GM23248 (cell line): ENCODE measurements at regions of chrX and their contacts with region 1.

Region 1: DNA sequence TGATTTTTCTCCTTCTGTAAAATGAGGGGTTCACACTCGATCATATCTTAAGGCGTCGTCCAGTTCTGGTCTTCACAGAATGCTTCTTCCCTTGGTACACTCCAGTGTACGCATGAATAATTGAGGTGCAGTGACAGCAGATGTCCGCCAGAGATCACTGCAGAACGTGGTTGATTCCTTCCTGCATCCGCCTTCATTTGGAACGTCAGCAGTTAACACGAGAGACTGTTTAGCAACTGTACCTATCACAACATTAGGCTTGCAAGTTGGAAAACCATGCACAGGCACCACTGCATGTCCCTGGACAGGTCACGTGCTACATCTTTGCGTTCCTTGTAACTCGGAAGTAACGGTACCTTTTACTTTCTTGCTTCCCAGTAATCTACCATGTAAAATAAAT is 66.0 kb upstream of the GEMIN8 start:
- DNase-seq: peak; percentile 71
- H3K4me3 ChIP-seq: peak overlapping the region; percentile 56
- H3K27ac ChIP-seq: no peak overlapping the region
- H3K4me1 ChIP-seq: no peaks in the 10 kb centered on the region
- H3K27me3 ChIP-seq: no peaks in the 10 kb centered on the region

Region 2: GRCh38 chrX:15143050-15143824 is 1047.5 kb after region 1 on chrX:
- in situ Hi-C with region 1: loop called (anchors 10 kb)
- DNase-seq: peak; percentile 59
- H3K4me3 ChIP-seq: no peak overlapping the region
- H3K27ac ChIP-seq: no peak overlapping the region
- H3K4me1 ChIP-seq: no peaks in the 10 kb centered on the region
- H3K27me3 ChIP-seq: no peaks in the 10 kb centered on the region

Region 3: DNA sequence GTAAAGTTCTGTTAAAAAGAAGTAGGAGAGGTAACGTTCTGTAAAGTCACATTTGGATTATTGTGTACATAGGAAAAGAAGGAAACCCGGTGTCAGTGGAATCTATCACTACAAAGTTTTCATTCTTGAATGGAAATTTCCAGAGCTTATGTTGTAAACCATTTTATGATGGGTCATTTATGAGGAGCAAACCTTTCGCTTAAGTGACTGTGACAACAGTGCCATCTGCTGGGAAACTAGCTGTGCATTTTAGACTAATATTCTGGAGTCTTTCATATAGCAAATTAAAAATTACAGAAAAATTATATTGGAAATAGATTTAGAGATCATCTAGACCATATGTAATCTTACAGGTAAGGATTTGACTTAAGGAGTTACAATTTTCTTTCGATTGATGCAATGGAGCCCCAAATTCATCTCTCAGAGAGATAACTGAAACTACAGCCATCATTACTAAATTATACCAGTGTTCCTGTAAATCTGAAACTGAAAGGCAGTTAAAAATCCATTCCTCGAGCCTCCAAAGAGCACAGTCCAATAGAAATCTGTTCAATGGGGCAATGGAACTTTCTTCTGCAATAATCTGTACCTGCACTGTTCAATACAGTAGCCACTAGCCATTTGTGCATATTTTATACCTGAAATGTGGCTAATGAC is 1147.3 kb after region 1 on chrX:
- in situ Hi-C with region 1: loop called (anchors 25 kb)
- DNase-seq: peak; percentile 67
- H3K4me3 ChIP-seq: no peak overlapping the region
- H3K27ac ChIP-seq: no peak overlapping the region
- H3K4me1 ChIP-seq: no peaks in the 10 kb centered on the region
- H3K27me3 ChIP-seq: no peaks in the 10 kb centered on the region